Right ventricle myocardium inferior (tissue), 1 donor: ENCODE measurements at regions of chr18 and their contacts with region 1.

Region 1: DNA sequence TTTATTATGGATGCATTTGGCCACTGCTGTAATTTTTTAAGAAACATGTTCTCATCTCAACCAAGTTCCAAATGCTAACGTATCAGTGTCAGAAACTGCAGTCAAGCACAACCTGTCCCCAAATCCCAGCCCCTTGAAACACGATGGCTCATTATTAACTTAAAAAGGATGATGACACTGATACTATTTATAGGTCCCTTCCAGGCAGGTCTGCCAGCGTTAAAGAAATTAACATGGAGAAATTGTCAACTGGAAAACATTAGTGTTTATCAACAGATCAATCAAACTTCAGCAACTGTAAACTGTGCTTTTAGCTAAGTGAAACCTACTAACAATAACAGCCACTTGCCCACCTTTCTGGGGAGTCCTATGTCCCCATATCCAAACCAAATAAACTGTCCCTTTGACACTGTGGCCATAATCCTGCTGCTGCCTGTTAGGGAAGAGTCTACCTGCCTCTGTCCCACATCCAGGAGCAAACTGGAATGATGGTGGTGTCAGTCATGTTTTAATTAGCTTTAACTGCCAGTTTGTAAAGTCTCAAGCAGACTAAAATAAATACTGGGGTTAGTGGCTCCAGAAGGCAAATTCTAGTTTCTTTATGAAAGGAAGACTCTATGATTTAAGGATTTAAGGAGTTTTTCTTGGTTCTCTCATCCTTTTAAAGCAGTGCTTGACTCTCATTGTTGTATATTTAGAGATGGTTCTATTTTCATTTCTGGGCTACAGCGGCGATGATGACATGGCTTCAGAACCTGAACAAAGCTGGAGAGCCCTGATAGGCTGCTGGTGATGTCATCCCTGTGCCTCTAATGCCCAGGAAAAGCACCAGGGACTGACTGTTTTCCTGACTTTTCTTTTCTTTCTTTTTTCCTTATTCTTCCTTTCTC is 583.6 kb upstream of the PIK3C3 start:
- DNase-seq: no peak
- ATAC-seq: no peak

Region 2: GRCh38 chr18:40868110-40868858 is 503.1 kb before region 1 on chr18:
- intact Hi-C with region 1: no loop called
- DNase-seq: no peak
- ATAC-seq: no peak

Region 3: GRCh38 chr18:41311571-41312547 is 59.5 kb before region 1 on chr18:
- intact Hi-C with region 1: loop called (anchors 10 kb)
- DNase-seq: no peak
- ATAC-seq: no peak